CD4-positive, alpha-beta memory T cell (primary cell): ENCODE measurements at regions of chr11 and their contacts with region 1.

Region 1: DNA sequence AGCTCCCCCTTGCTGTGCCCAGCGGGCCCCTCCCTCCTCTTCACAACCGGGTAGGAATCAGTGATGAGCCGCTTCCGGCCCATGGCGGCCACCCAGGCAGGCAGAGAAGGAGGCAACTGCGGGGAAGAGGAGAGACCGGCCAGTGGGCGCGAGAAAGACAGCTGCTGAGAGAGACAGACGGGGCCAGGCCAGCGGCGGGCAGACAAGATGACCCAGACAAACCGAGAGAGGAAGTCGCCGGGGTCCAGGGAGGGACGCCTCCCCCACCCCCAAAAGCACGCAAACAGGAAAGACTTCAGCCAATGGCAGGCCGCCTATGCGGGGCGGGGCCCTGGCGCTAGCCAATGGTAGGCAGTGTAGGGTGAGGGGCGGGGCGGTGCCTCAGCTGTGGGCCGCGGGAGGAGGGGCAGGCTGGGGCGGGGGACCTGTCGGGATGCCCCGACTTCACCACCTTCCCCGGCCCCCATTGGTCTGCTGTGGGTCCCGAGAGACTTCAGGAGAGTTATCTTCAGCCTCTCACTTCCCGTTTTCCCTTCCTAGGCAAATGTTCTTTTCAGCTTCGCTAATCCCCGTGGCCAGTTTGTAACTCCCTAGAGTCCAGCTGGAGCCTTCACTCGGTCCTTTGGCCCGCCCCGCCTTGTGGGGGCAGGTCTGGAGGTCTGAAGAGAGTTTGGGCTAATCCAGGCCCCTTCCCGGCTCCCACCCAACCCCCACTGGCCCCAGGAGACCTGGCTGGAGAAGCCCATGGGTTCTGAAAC is at the start of gene POLD4:
- DNase-seq: peak; percentile 94 to 96 (median 95)
- H3K4me3 ChIP-seq: peak within 1 kb of the TSS; percentile 86 to 99
- H3K4me3 Mint-ChIP-seq: peak within 1 kb of the TSS; percentile 97 to 100 (median 99)
- H3K27ac ChIP-seq: peak within 1 kb of the TSS; percentile 96
- H3K27ac Mint-ChIP-seq: peak within 1 kb of the TSS; percentile 99 to 100 (median 100)
- H3K4me1 ChIP-seq: peaks cover 51% of the 10 kb centered on the region
- H3K4me1 Mint-ChIP-seq: peaks cover 31 to 68% (median 44%) of the 10 kb centered on the region in 4 donors
- H3K27me3 ChIP-seq: no peaks in the 10 kb centered on the region
- H3K27me3 Mint-ChIP-seq: no peaks in the 10 kb centered on the region
- total RNA-seq, gene POLD4: 87.9 to 91.3 TPM

Region 2: GRCh38 chr11:66787912-66788758 is 565.4 kb before region 1 on chr11:
- CTCF ChIA-PET with region 1: no interaction called
- POLR2A ChIA-PET with region 1: no interaction called
- intact Hi-C with region 1: no loop called
- DNase-seq: no peak
- H3K4me3 ChIP-seq: no peak overlapping the region
- H3K4me3 Mint-ChIP-seq: no peak overlapping the region
- H3K27ac ChIP-seq: no peak overlapping the region
- H3K27ac Mint-ChIP-seq: no peak overlapping the region
- H3K4me1 ChIP-seq: no peaks in the 10 kb centered on the region
- H3K4me1 Mint-ChIP-seq: peaks cover 0 to 4% (median 0%) of the 10 kb centered on the region in 4 donors
- H3K27me3 ChIP-seq: no peaks in the 10 kb centered on the region
- H3K27me3 Mint-ChIP-seq: no peaks in the 10 kb centered on the region

Region 3: GRCh38 chr11:67288452-67289225 is 64.9 kb before region 1 on chr11:
- CTCF ChIA-PET with region 1: interaction called, 13 read pairs
- POLR2A ChIA-PET with region 1: interaction called, 27 read pairs
- intact Hi-C with region 1: no loop called
- DNase-seq: peak; percentile 89 to 94 (median 91)
- H3K4me3 ChIP-seq: peak overlapping the region; percentile 58 to 62
- H3K4me3 Mint-ChIP-seq: peak overlapping the region; percentile 79 to 90 (median 86)
- H3K27ac ChIP-seq: peak overlapping the region; percentile 88
- H3K27ac Mint-ChIP-seq: peak overlapping the region; percentile 95 to 100 (median 98)
- H3K4me1 ChIP-seq: peaks cover 77% of the 10 kb centered on the region
- H3K4me1 Mint-ChIP-seq: peaks cover 32 to 81% (median 46%) of the 10 kb centered on the region in 4 donors
- H3K27me3 ChIP-seq: no peaks in the 10 kb centered on the region
- H3K27me3 Mint-ChIP-seq: no peaks in the 10 kb centered on the region

Region 4: GRCh38 chr11:67373925-67374618 is 20.6 kb after region 1 on chr11:
- CTCF ChIA-PET with region 1: interaction called, 1,065 read pairs
- POLR2A ChIA-PET with region 1: interaction called, 449 read pairs
- intact Hi-C with region 1: loop called (anchors 1 kb)
- DNase-seq: peak in 3 of 5 donors; percentile 49 to 73 (median 51)
- H3K4me3 ChIP-seq: peak overlapping the region; percentile 34 to 63
- H3K4me3 Mint-ChIP-seq: peak overlapping the region; percentile 73 to 95 (median 86)
- H3K27ac ChIP-seq: peak overlapping the region; percentile 38
- H3K27ac Mint-ChIP-seq: peak overlapping the region; percentile 57 to 97 (median 87)
- H3K4me1 ChIP-seq: peaks cover 53% of the 10 kb centered on the region
- H3K4me1 Mint-ChIP-seq: peaks cover 36 to 67% (median 42%) of the 10 kb centered on the region in 4 donors
- H3K27me3 ChIP-seq: no peaks in the 10 kb centered on the region
- H3K27me3 Mint-ChIP-seq: peaks cover 4% of the 10 kb centered on the region in 2 donors

Region 5: DNA sequence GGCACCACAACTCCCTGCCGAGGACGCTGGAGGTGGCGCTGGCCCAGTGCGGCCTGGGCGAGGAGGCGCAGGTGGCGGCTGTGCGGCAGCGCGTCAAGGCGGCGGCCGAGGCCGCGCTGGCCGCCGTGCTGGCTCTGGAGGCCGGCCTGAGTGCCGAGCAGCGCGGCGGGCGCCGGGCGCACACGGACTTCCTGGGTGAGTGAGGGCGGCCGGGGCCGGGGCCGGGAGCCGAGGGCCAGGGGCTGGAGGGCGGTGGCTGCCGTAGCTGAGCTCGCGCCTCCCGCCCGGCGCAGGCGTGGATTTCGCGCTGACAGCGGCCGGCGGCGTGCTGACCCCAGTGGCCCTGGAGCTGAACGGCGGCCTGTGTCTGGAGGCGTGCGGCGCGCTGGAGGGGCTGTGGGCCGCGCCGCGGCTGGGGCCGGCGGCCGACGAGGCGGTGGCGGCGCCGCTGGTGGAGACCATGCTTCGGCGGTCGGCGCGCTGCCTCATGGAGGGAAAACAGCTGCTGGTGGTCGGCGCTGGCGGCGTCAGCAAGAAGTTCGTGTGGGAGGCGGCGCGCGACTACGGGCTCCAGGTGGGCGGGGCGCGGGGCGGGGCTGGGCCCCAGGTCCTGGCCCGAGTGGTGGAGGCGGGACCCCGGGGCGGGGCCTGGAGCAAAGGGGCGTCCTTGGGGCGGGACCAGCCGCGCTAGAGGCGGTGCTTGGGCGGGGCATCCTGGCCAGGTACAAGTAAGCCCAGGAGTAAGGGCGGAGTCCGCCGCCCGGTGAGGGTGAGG is 67.3 kb after region 1 on chr11:
- CTCF ChIA-PET with region 1: interaction called, 3 read pairs
- POLR2A ChIA-PET with region 1: interaction called, 14 read pairs
- intact Hi-C with region 1: no loop called
- DNase-seq: peak; percentile 96 to 99 (median 97)
- H3K4me3 ChIP-seq: peak overlapping the region in 1 of 2 donors; percentile 69
- H3K4me3 Mint-ChIP-seq: peak overlapping the region; percentile 67 to 87 (median 80)
- H3K27ac ChIP-seq: peak overlapping the region; percentile 66
- H3K27ac Mint-ChIP-seq: peak overlapping the region; percentile 64 to 94 (median 92)
- H3K4me1 ChIP-seq: peaks cover 53% of the 10 kb centered on the region
- H3K4me1 Mint-ChIP-seq: peaks cover 29 to 63% (median 46%) of the 10 kb centered on the region in 4 donors
- H3K27me3 ChIP-seq: no peaks in the 10 kb centered on the region
- H3K27me3 Mint-ChIP-seq: no peaks in the 10 kb centered on the region

Region 6: DNA sequence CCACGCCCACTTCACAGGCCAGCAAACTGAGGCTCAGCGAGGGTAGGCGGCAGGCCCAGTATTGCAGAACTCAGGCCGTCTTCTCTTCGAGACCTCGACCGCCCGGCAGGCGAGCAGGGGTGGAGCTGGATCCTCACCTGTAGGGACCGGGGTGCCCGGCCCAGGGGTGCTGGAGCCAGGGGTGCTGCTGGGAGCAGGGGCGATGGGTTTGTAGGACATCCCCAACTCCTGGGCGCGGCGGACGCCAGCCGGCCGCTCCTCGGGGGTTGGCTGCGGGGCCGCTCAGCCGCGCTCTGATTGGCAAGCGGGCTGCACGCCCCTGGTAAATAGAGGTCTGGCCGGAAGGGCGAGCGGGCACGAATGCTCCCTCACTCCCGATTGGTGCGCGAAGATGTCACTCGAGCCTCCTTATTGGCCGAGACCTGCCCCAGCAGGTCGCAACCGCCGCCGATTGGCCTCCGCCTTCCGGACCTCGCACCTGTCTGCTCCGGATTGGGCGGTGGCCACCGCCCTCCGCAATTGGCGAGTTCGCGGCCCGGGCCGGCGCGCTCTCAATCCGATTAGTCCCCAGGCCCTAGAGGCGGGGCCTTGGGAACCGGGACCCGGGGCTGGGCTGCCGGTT is 154.5 kb after region 1 on chr11 and contains the start of gene CDK2AP2:
- CTCF ChIA-PET with region 1: interaction called, 7 read pairs
- POLR2A ChIA-PET with region 1: interaction called, 8 read pairs
- intact Hi-C with region 1: loop called (anchors 1 kb)
- DNase-seq: peak; percentile 96 to 98 (median 97)
- H3K4me3 ChIP-seq: peak within 1 kb of the TSS; percentile 77 to 79
- H3K4me3 Mint-ChIP-seq: peak within 1 kb of the TSS; percentile 88 to 98 (median 90)
- H3K27ac ChIP-seq: peak within 1 kb of the TSS; percentile 93
- H3K27ac Mint-ChIP-seq: peak within 1 kb of the TSS; percentile 97 to 99 (median 99)
- H3K4me1 ChIP-seq: peaks cover 44% of the 10 kb centered on the region
- H3K4me1 Mint-ChIP-seq: peaks cover 20 to 55% (median 33%) of the 10 kb centered on the region in 4 donors
- H3K27me3 ChIP-seq: no peaks in the 10 kb centered on the region
- H3K27me3 Mint-ChIP-seq: peaks cover 3% of the 10 kb centered on the region in 2 donors
- total RNA-seq, gene CDK2AP2: 85.8 to 86.0 TPM